Heart left ventricle (tissue), 16 donors: ENCODE measurements at regions of chr9 and their contacts with region 1.

Region 1: DNA sequence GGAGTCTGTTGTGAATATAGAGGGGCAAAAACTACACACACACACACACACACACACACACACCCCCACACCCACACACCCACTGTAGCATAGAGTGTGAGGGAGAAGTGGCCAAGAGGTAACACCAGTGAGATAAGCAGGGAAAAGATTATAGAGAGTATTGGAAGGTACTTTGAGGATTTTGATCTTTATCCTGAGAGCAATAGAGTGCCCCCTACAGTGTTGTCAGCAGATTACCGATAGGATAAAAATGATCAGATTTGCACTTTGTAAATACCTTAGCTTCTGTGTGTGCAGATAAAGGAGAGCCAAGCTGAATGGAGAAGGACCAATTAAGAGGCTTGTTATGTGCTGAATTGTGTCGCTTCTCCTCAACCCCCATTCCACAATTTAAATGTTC is 32.3 kb downstream of the ERCC6L2 start:
- DNase-seq: no peak
- ATAC-seq: no peak
- H3K4me3 ChIP-seq: no peak overlapping the region
- H3K27ac ChIP-seq: no peak overlapping the region
- H3K4me1 ChIP-seq: no peaks in the 10 kb centered on the region
- H3K27me3 ChIP-seq: no peaks in the 10 kb centered on the region
- CTCF ChIP-seq: no peak
- POLR2A ChIP-seq: no peak

Region 2: DNA sequence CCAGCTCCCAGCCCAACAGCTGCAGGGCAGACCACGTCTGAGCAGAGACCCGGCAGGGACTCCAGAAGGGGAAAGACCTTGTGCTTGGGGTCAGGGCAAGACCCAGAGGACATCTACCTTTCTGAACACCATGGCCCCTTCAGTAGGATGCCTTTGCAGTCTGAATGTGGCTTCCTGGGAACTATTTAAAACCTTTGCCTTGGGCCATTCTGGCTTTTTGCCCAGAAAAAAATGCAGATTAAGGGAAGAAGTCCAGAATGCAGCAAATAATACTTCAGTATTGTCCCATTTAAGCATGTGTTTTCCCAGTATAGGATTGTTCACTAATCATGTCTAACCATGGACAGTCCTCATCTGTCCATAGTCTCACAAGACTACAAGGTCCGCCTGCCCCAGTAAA is 99.8 kb before region 1 on chr9:
- intact Hi-C with region 1: no loop called
- DNase-seq: no peak
- ATAC-seq: no peak
- H3K4me3 ChIP-seq: no peak overlapping the region
- H3K27ac ChIP-seq: peak overlapping the region in 3 of 12 donors; percentile 14 to 34 (median 23)
- H3K4me1 ChIP-seq: peaks cover 0 to 16% (median 2%) of the 10 kb centered on the region in 12 donors
- H3K27me3 ChIP-seq: no peaks in the 10 kb centered on the region
- CTCF ChIP-seq: no peak
- POLR2A ChIP-seq: no peak

Region 3: GRCh38 chr9:95947118-95947517 is 39.3 kb after region 1 on chr9:
- intact Hi-C with region 1: loop called in 1 of 10 experiments (anchors 2 kb)
- DNase-seq: no peak
- ATAC-seq: no peak
- H3K4me3 ChIP-seq: no peak overlapping the region
- H3K27ac ChIP-seq: no peak overlapping the region
- H3K4me1 ChIP-seq: no peaks in the 10 kb centered on the region
- H3K27me3 ChIP-seq: no peaks in the 10 kb centered on the region
- CTCF ChIP-seq: no peak
- POLR2A ChIP-seq: no peak

Region 4: GRCh38 chr9:96008502-96009222 is 100.9 kb after region 1 on chr9:
- intact Hi-C with region 1: no loop called
- DNase-seq: no peak
- ATAC-seq: no peak
- H3K4me3 ChIP-seq: no peak overlapping the region
- H3K27ac ChIP-seq: peak overlapping the region in 1 of 12 donors; percentile 38
- H3K4me1 ChIP-seq: peaks cover 0 to 19% (median 0%) of the 10 kb centered on the region in 12 donors
- H3K27me3 ChIP-seq: no peaks in the 10 kb centered on the region
- CTCF ChIP-seq: no peak
- POLR2A ChIP-seq: no peak